IMR-90 (cell line): ENCODE measurements at regions of chr3 and their contacts with region 1.

Region 1: DNA sequence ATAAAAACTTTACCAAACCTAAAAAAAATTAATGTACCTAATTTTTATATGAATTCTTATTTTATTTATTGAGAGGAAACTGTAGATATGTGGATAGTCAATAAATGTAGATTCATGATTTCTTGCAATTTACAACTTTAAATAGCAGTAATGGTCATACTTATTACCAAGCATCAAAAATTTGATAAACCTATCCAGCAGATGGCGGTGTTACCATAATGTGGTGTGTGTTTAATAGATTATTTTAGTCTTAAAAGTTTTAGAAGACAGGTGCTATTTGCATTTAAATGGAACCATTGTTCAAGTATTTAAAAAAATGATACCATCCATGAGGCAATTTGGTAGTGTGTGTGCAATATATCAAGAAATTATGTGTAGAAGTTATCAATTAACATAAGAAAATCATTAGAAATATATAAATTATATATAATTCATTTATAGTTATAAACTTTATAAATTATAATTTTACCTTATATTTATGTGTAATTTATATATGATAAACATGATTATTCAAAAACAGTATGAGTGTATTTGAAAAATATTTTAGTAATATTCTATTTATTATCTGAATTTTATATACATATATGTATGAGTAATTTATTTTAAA is 176.0 kb upstream of the BCHE start:
- DNase-seq: peak; percentile 37
- ATAC-seq: no peak
- H3K4me3 ChIP-seq: no peak overlapping the region
- H3K27ac ChIP-seq: no peak overlapping the region
- H3K4me1 ChIP-seq: no peaks in the 10 kb centered on the region
- H3K27me3 ChIP-seq: no peaks in the 10 kb centered on the region
- CTCF ChIP-seq: peak; percentile 54
- POLR2A ChIP-seq: no peak
- RAD21 ChIP-seq: peak; percentile 65

Region 2: GRCh38 chr3:166367947-166368522 is 354.9 kb after region 1 on chr3:
- CTCF ChIA-PET with region 1: no interaction called
- POLR2A ChIA-PET with region 1: no interaction called
- dilution Hi-C with region 1: no loop called
- in situ Hi-C with region 1: no loop called
- intact Hi-C with region 1: no loop called
- DNase-seq: no peak
- ATAC-seq: no peak
- H3K4me3 ChIP-seq: no peak overlapping the region
- H3K27ac ChIP-seq: no peak overlapping the region
- H3K4me1 ChIP-seq: no peaks in the 10 kb centered on the region
- H3K27me3 ChIP-seq: no peaks in the 10 kb centered on the region
- CTCF ChIP-seq: no peak
- POLR2A ChIP-seq: no peak
- RAD21 ChIP-seq: no peak

Region 3: GRCh38 chr3:166902374-166902773 is 889.2 kb after region 1 on chr3:
- CTCF ChIA-PET with region 1: no interaction called
- POLR2A ChIA-PET with region 1: no interaction called
- dilution Hi-C with region 1: no loop called
- in situ Hi-C with region 1: no loop called
- intact Hi-C with region 1: loop called (anchors 5 kb)
- DNase-seq: no peak
- ATAC-seq: no peak
- H3K4me3 ChIP-seq: no peak overlapping the region
- H3K27ac ChIP-seq: no peak overlapping the region
- H3K4me1 ChIP-seq: no peaks in the 10 kb centered on the region
- H3K27me3 ChIP-seq: no peaks in the 10 kb centered on the region
- CTCF ChIP-seq: peak; percentile 25; the same call in 1 of the 2 replicates
- POLR2A ChIP-seq: no peak
- RAD21 ChIP-seq: peak; percentile 21; the same call in 1 of the 2 replicates

Region 4: GRCh38 chr3:167380004-167380689 is 1367.0 kb after region 1 on chr3 and contains the start of gene ZBBX:
- CTCF ChIA-PET with region 1: no interaction called
- POLR2A ChIA-PET with region 1: no interaction called
- dilution Hi-C with region 1: no loop called
- in situ Hi-C with region 1: no loop called
- intact Hi-C with region 1: loop called (anchors 10 kb)
- DNase-seq: peak; percentile 59
- ATAC-seq: peak; percentile 99
- H3K4me3 ChIP-seq: peak within 1 kb of the TSS; percentile 50
- H3K27ac ChIP-seq: no peak within 1 kb of the TSS
- H3K4me1 ChIP-seq: no peaks in the 10 kb centered on the region
- H3K27me3 ChIP-seq: no peaks in the 10 kb centered on the region
- CTCF ChIP-seq: peak; percentile 93
- POLR2A ChIP-seq: no peak
- RAD21 ChIP-seq: peak; percentile 72
- total RNA-seq, gene ZBBX: not detected in 2 replicates

Region 5: GRCh38 chr3:167734498-167735232 is 1721.5 kb after region 1 on chr3 and contains the start of gene PDCD10:
- CTCF ChIA-PET with region 1: no interaction called
- POLR2A ChIA-PET with region 1: no interaction called
- dilution Hi-C with region 1: no loop called
- in situ Hi-C with region 1: no loop called
- intact Hi-C with region 1: loop called (anchors 5 kb)
- DNase-seq: peak; percentile 98
- ATAC-seq: peak; percentile 92
- H3K4me3 ChIP-seq: peak within 1 kb of the TSS; percentile 80
- H3K27ac ChIP-seq: peak within 1 kb of the TSS; percentile 79
- H3K4me1 ChIP-seq: no peaks in the 10 kb centered on the region
- H3K27me3 ChIP-seq: no peaks in the 10 kb centered on the region
- CTCF ChIP-seq: no peak
- POLR2A ChIP-seq: peak; percentile 71
- RAD21 ChIP-seq: no peak
- total RNA-seq, gene PDCD10: 36.7 and 63.0 TPM in 2 replicates